ENCODE measurements at regions of chr1 and their contacts with region 1.

Region 1: GRCh38 chr1:169959686-169960085 is 66.0 kb upstream of the SCYL3 start:
- DNase-seq: no peak
- ATAC-seq: no peak

Region 2: GRCh38 chr1:169809370-169810095 is 150.2 kb before region 1 on chr1:
- intact Hi-C with region 1: loop called (anchors 5 kb)
- DNase-seq: no peak
- ATAC-seq: peak; percentile 53